MCF 10A (cell line): ENCODE measurements at regions of chr13 and their contacts with region 1.

Region 1: GRCh38 chr13:33542283-33543088 is 256.9 kb upstream of the STARD13 start:
- DNase-seq: peak; percentile 98
- H3K4me3 Mint-ChIP-seq: peak overlapping the region; percentile 87
- H3K27ac Mint-ChIP-seq: peak overlapping the region; percentile 99
- H3K4me1 Mint-ChIP-seq: peaks cover 8% of the 10 kb centered on the region
- H3K27me3 Mint-ChIP-seq: no peaks in the 10 kb centered on the region
- CTCF ChIP-seq: peak; percentile 81

Region 2: DNA sequence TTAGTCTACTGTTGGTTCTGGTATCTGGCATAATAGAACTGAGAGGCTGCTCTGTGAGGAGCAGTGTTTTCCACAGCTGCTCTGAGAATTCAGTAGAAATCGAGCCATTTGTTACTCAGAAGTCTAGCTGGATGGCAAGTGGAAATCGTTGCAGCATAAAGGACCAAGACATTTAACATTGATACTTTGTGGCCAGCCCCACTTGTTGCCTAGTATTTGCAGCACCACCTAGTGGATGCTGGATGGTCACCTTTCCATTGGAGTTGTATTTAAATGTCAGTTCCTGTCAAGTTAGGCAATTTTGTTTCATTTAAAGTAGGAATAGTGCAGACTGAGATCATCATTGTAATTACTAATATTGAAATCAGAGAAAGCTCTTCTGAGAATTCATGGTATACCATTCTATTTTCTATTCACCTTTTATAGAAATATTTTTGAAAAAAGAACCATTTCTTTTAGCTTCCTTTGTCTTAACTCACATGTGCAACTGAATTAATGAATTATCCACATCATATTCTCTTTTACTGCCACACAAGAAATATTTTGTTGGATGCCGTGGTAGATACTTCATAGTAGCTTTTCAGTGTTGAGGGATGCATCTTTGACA is 891.7 kb before region 1 on chr13:
- CTCF ChIA-PET with region 1: no interaction called
- POLR2A ChIA-PET with region 1: interaction called, 5 read pairs
- intact Hi-C with region 1: loop called (anchors 5 kb)
- DNase-seq: peak; percentile 74
- H3K4me3 Mint-ChIP-seq: no peak overlapping the region
- H3K27ac Mint-ChIP-seq: no peak overlapping the region
- H3K4me1 Mint-ChIP-seq: peaks cover 6% of the 10 kb centered on the region
- H3K27me3 Mint-ChIP-seq: no peaks in the 10 kb centered on the region
- CTCF ChIP-seq: peak; percentile 79

Region 3: DNA sequence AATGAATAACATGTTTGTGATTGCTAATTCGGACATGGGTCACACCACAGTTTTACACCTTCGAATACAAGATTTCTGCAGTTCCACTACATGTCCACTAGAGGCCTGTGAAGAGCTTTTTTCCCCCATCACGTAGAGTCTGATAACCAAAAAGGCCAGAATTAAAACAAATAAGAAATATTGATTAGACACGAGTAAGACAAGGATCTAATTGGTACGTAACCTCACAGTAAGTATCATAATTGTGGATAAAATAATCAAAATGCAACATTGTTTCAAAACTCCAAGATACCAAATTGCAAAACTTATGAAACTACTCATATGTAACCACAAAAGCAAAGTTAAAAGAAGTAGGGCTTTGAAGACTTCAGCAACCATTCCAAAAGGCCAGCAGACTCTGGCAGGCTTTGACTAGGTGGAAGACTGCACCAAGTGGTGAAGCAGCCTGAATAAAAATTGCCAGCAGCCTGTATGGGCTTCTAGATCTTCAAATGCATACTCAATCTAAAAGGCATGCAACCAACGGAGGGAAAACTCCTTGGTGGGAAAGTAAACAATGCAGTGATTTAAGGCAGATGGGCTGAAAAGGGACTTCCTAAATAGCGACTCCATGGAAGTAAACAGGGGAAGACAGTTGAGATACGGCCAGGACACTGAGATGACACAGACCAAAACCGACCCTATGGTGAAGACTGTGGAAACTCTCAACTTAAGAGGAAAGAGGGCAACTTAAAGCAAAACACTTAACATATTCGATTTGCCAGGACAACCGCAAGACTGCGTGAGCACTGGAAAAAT is 313.6 kb before region 1 on chr13:
- CTCF ChIA-PET with region 1: interaction called, 6 read pairs
- POLR2A ChIA-PET with region 1: interaction called, 7 read pairs
- intact Hi-C with region 1: loop called (anchors 1 kb)
- DNase-seq: peak; percentile 61
- H3K4me3 Mint-ChIP-seq: peak overlapping the region; percentile 9
- H3K27ac Mint-ChIP-seq: peak overlapping the region; percentile 46
- H3K4me1 Mint-ChIP-seq: peaks cover 49% of the 10 kb centered on the region
- H3K27me3 Mint-ChIP-seq: no peaks in the 10 kb centered on the region
- CTCF ChIP-seq: peak; percentile 89

Region 4: GRCh38 chr13:33312150-33312860 is 230.2 kb before region 1 on chr13:
- CTCF ChIA-PET with region 1: no interaction called
- POLR2A ChIA-PET with region 1: no interaction called
- intact Hi-C with region 1: loop called (anchors 1 kb)
- DNase-seq: peak; percentile 54
- H3K4me3 Mint-ChIP-seq: no peak overlapping the region
- H3K27ac Mint-ChIP-seq: no peak overlapping the region
- H3K4me1 Mint-ChIP-seq: peaks cover 5% of the 10 kb centered on the region
- H3K27me3 Mint-ChIP-seq: no peaks in the 10 kb centered on the region
- CTCF ChIP-seq: peak; percentile 59

Region 5: GRCh38 chr13:33642374-33643068 is 100.0 kb after region 1 on chr13:
- CTCF ChIA-PET with region 1: interaction called, 10 read pairs
- POLR2A ChIA-PET with region 1: interaction called, 15 read pairs
- intact Hi-C with region 1: no loop called
- DNase-seq: peak; percentile 85
- H3K4me3 Mint-ChIP-seq: no peak overlapping the region
- H3K27ac Mint-ChIP-seq: peak overlapping the region; percentile 79
- H3K4me1 Mint-ChIP-seq: peaks cover 58% of the 10 kb centered on the region
- H3K27me3 Mint-ChIP-seq: no peaks in the 10 kb centered on the region
- CTCF ChIP-seq: no peak